ENCODE measurements at regions of chr11 and their contacts with region 1.

Region 1: DNA sequence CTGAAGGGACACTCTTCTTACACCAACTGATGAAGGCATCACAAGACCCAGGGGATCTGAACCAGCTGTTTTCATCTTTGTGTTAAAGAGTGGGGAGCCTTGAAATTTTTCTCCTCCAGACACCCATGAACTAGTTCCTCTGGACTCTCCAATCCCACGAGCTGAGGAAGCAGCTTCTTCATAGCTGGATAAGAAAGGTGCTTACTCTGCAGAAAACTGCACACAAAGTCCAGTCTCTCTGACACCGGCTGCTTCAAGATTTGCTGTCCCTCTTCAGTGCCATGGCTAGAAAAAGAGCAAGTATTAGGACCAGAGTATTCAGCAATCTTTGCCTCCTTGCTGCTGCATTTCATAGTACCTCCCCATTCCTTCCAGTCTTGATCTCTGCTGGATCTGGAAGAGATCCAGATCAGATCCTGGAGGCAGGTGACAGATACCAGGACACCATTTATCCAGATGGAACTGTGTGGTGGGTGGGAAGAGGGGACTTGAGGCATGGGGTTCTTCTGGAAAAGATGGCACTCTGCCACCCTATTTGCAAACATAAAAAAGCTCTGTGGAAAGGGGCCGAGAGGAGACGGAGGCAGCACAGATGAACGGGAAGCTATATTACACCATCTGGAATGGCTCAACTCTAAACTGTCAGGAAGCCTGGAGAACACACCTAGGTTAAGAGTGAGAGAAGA is 25.5 kb downstream of the IL18BP start:
- DNase-seq: no peak
- ATAC-seq: no peak
- H3K4me3 Mint-ChIP-seq: no peak overlapping the region
- H3K27ac Mint-ChIP-seq: no peak overlapping the region
- H3K4me1 Mint-ChIP-seq: peaks cover 3% of the 10 kb centered on the region; the same call in 1 of the 2 replicates
- H3K27me3 Mint-ChIP-seq: no peaks in the 10 kb centered on the region
- CTCF ChIP-seq: no peak

Region 2: DNA sequence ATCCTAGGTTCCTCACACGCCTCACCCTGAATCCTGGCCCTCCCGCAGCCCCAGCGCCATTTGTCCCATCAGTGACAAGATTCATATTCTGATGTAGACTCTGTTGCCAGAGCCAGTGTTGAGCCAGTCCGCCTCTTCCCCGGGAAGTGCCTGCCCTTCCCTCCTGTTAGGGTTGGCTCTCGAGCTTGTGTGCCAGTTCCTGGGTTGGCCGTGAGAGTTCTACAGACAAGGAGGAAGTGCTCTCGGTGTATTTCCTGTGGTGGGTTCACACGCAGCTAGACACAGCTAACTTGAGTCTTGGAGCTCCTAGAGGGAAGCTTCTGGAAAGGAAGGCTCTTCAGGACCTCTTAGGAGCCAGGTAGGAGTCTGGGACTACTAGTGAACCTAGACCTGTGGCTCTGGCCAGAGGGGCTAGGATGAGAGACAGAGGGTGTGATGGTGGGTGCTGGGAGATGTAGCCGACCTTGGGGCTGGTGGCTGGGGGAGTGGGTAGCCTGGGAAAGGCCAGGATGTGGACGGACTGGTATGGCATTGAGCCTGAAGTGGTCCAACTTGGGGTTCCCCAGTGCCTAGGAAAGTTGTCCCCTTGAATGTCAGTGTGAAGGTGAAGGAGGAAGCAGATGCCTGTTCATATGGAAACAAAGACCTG is 25.4 kb before region 1 on chr11 and contains the start of gene IL18BP:
- CTCF ChIA-PET with region 1: interaction called, 13 read pairs
- POLR2A ChIA-PET with region 1: no interaction called
- DNase-seq: no peak
- ATAC-seq: no peak
- H3K4me3 Mint-ChIP-seq: no peak within 1 kb of the TSS
- H3K27ac Mint-ChIP-seq: 0 out of 2 replicates have a peak within 1 kb of the TSS, but pooled peaks have one; percentile 4
- H3K4me1 Mint-ChIP-seq: no peaks in the 10 kb centered on the region
- H3K27me3 Mint-ChIP-seq: no peaks in the 10 kb centered on the region
- CTCF ChIP-seq: no peak
- total RNA-seq, gene IL18BP: 14.1 to 17.3 TPM (median 15.0 TPM) in 3 replicates

Region 3: DNA sequence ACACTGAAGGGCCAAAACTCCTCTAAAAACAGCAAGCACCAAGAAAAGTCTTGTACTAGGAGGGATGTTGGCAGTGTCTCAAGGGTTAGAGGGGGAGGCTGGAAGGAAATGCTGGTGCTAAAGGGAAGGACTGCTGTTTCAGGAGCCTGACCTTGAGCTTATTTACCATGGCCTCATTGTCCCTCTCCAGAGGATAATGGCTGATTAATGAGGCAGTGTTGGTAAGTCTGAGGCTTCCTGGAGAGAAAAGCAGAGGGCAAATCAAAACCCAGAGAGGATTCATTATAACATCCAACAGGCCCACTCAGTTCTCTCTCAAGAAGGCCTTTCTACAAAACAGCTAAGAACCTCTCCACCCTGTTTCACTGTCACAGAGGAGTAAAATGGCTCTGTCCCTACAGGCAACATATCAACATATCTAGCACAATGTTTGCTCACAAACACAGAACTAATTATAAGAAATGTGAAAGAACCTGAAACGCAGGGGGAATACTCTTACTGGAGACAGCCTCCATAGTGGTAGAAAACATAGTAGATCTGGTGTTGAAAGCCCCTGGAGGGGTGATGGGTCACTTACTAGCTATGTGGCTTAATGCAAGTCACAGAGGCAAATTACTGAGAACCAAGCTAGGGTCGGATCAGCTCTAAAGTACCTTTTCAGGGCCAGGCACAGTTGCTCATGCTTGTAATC is 24.7 kb after region 1 on chr11:
- CTCF ChIA-PET with region 1: interaction called, 34 read pairs
- POLR2A ChIA-PET with region 1: no interaction called
- DNase-seq: no peak
- ATAC-seq: peak; percentile 86
- H3K4me3 Mint-ChIP-seq: no peak overlapping the region; the same call in 1 of the 2 replicates
- H3K27ac Mint-ChIP-seq: peak overlapping the region; percentile 90
- H3K4me1 Mint-ChIP-seq: peaks cover 28% of the 10 kb centered on the region
- H3K27me3 Mint-ChIP-seq: no peaks in the 10 kb centered on the region
- CTCF ChIP-seq: no peak

Region 4: DNA sequence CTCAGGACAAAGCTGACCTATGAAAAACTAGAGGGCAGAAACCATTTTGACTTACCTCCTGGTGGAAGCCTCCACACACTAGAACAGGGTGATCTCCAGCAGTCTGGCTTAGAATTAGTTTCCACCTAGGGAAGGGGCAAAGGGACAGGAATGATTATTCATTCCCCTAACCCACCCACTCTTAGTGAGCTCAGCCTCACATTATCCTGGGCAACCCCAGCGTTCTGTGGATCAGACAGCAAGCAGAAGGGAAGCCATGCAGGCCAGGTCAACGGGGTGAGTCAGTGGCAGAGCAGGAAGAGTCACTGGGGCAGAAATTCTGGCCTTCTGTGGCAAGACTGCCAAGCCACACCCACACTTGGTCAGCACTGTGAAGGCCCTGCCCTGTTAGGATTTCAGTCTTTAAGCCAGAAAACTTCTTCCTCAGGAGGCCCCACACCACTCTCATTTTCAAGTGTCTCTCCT is 45.6 kb after region 1 on chr11:
- CTCF ChIA-PET with region 1: interaction called, 28 read pairs
- POLR2A ChIA-PET with region 1: no interaction called
- DNase-seq: no peak
- ATAC-seq: peak; percentile 78
- H3K4me3 Mint-ChIP-seq: no peak overlapping the region
- H3K27ac Mint-ChIP-seq: peak overlapping the region; percentile 39
- H3K4me1 Mint-ChIP-seq: peaks cover 37% of the 10 kb centered on the region
- H3K27me3 Mint-ChIP-seq: no peaks in the 10 kb centered on the region
- CTCF ChIP-seq: no peak

Region 5: DNA sequence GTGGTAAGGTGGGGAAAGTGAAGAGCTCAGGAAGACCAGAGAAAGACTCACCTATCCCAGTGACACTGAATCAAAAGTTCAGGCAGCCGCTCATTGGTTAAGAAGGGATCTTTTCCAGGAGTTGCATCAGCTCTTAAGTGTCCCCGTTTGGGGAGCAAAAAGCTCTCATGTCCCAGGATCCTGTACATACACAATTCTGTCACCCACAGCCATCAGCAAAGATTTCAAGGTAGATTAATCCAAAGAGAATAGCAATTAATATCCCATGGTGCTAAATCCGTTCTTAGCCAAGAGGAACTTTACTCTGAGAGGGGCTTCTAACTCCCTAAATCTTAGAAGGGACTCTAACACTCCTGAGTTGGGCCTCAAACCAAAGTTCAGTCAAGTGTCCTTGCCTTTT is 130.6 kb after region 1 on chr11:
- CTCF ChIA-PET with region 1: interaction called, 10 read pairs
- POLR2A ChIA-PET with region 1: no interaction called
- DNase-seq: no peak
- ATAC-seq: no peak
- H3K4me3 Mint-ChIP-seq: no peak overlapping the region
- H3K27ac Mint-ChIP-seq: no peak overlapping the region
- H3K4me1 Mint-ChIP-seq: no peaks in the 10 kb centered on the region
- H3K27me3 Mint-ChIP-seq: peaks cover 12% of the 10 kb centered on the region
- CTCF ChIP-seq: no peak

Measured in WTC11 (cell line).